Vagina (tissue), 2 donors: ENCODE measurements at regions of chr20 and their contacts with region 1.

Region 1: GRCh38 chr20:23147964-23148730 is 62.0 kb upstream of the CD93 start:
- DNase-seq: no peak
- H3K4me3 ChIP-seq: no peak overlapping the region
- H3K27ac ChIP-seq: peak overlapping the region; percentile 48
- H3K4me1 ChIP-seq: peaks cover 67% of the 10 kb centered on the region
- H3K27me3 ChIP-seq: no peaks in the 10 kb centered on the region
- CTCF ChIP-seq: no peak
- POLR2A ChIP-seq: no peak

Region 2: DNA sequence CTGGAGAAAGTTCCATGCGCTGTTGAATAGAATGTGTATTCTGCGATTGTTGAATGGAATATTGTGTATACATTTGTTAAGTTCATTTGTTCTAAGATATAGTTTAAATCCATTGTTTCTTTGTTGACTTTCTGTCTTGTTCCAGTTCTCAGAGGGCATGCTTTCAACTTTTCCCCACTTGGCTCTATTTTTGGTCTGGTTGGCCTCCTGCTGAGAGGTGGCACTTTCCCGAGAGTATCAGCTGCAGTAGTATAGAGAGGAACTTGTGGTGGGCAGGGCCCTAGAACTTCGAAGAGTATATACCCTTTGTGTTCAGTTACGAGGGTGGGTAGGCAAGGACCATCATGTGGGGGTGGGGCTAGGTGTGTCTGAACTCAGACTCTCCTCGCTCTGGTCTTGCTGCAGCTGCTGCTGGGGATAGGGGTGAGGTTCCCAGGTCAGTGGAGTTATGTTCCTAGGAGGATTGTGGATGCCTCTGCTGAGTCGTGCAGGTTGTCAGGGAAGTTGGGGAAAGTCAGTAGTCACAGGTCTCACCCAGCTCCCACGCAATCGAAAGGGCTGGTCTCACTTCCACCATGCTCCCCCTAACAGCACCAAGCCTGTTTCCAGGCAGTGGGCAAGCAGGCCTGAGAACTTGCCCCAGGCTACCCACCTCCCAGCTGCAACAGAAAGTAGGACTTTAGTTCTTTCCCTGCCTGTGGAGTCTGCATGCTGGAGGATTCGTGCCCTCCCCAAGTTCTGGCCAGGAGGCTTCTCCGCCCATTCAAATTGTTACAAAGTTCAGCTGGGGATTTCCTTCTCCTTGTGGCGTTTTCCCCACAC is 231.9 kb before region 1 on chr20:
- intact Hi-C with region 1: no loop called
- DNase-seq: no peak
- H3K4me3 ChIP-seq: no peak overlapping the region
- H3K27ac ChIP-seq: no peak overlapping the region
- H3K4me1 ChIP-seq: peaks cover 1% of the 10 kb centered on the region
- H3K27me3 ChIP-seq: no peaks in the 10 kb centered on the region
- CTCF ChIP-seq: no peak
- POLR2A ChIP-seq: no peak

Region 3: DNA sequence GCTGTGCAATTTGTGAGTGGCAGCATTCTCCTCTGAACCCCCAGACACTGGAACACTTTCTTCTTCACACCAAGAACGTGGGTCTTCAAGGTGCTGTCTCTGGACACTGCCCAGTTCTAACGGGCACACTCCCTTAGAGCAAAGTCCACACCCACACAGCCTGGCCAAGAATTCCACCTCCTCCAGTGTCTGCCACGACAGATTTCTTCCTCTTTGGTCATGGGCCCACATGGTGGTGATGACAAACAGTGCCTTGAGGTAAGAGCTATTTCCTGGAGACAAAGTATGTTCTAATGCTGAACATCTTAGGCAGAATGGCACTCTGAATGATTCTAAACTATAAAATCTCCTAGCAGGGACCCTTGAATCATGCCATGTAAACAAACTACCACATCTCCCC is 138.5 kb before region 1 on chr20:
- intact Hi-C with region 1: no loop called
- DNase-seq: peak; percentile 40 to 49
- H3K4me3 ChIP-seq: no peak overlapping the region
- H3K27ac ChIP-seq: no peak overlapping the region
- H3K4me1 ChIP-seq: no peaks in the 10 kb centered on the region
- H3K27me3 ChIP-seq: no peaks in the 10 kb centered on the region
- CTCF ChIP-seq: no peak
- POLR2A ChIP-seq: no peak

Region 4: GRCh38 chr20:23086056-23086566 is 62.0 kb before region 1 on chr20 and contains the start of gene CD93:
- intact Hi-C with region 1: loop called (anchors 10 kb)
- DNase-seq: no peak
- H3K4me3 ChIP-seq: peak within 1 kb of the TSS; percentile 22 to 38
- H3K27ac ChIP-seq: peak within 1 kb of the TSS; percentile 70
- H3K4me1 ChIP-seq: peaks cover 12% of the 10 kb centered on the region
- H3K27me3 ChIP-seq: no peaks in the 10 kb centered on the region
- CTCF ChIP-seq: no peak
- POLR2A ChIP-seq: no peak
- total RNA-seq, gene CD93: 45.4 TPM

Region 5: DNA sequence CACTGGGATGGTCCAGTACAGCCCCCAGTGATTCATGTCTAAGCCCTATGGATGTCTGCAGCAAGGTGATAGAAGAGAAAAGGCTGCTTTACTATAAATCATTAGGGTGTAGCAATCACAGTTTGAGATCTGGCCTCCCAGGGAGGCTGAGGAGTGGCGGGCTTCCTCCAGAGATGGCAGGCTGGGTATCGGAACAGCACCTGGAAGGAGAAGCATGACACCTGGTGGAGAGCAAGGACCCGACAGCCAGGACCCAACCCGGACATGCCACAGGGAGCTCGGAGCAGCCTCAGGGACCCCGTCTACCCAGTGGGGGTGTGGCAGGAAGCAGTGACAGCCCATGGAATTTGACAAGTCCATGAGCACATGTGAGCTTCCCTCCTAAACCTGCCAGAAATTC is 52.8 kb after region 1 on chr20:
- intact Hi-C with region 1: no loop called
- DNase-seq: no peak
- H3K4me3 ChIP-seq: no peak overlapping the region
- H3K27ac ChIP-seq: no peak overlapping the region
- H3K4me1 ChIP-seq: peaks cover 24% of the 10 kb centered on the region
- H3K27me3 ChIP-seq: no peaks in the 10 kb centered on the region
- CTCF ChIP-seq: no peak
- POLR2A ChIP-seq: no peak